ENCODE measurements at regions of chr12 and their contacts with region 1.

Region 1: DNA sequence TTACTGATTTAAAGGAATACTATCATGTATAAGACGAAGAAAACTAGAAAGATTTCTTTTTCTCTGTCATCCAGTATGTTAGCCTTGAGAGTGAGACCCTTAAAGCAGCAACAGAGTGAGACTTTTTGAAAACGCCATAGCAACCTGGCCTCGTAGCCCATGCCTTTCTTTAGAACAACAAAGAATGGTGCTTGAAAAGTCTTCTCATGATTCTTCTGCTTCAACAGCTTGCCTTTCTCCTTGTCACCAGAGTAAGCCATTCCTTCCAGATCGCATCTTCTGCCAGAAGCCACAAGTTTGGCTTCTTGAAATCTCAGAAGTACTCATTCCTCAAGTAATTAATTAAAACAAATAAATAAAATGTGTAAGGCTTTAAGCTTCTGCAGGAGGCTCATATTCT is 109.3 kb downstream of the PDE3A start:
- DNase-seq: no peak
- H3K4me3 ChIP-seq: no peak overlapping the region
- H3K27ac ChIP-seq: no peak overlapping the region
- H3K4me1 ChIP-seq: no peaks in the 10 kb centered on the region
- H3K27me3 ChIP-seq: no peaks in the 10 kb centered on the region
- CTCF ChIP-seq: no peak
- EP300 ChIP-seq: no peak
- POLR2A ChIP-seq: no peak

Region 2: DNA sequence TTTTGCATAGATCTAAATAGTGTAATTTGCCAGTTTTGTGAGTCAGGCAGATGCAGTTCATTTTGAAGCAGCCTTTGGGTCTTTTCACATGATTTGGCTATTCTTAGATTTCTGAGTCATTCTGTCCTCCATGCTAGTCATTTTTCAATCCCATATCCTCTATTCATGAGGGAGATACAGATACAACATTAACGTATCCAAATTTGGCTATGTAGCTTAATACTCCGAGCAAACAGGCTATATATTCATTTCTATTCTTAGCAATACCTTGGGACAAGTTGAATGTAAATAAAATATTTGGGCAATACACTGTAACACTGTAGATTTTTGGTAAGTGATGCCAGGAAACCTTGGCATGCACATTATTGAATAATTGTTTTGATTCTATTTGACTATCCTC is 380.0 kb before region 1 on chr12:
- intact Hi-C with region 1: no loop called
- DNase-seq: no peak
- H3K4me3 ChIP-seq: no peak overlapping the region
- H3K27ac ChIP-seq: no peak overlapping the region
- H3K4me1 ChIP-seq: peaks cover 3% of the 10 kb centered on the region
- H3K27me3 ChIP-seq: no peaks in the 10 kb centered on the region
- CTCF ChIP-seq: no peak
- EP300 ChIP-seq: no peak
- POLR2A ChIP-seq: no peak

Region 3: DNA sequence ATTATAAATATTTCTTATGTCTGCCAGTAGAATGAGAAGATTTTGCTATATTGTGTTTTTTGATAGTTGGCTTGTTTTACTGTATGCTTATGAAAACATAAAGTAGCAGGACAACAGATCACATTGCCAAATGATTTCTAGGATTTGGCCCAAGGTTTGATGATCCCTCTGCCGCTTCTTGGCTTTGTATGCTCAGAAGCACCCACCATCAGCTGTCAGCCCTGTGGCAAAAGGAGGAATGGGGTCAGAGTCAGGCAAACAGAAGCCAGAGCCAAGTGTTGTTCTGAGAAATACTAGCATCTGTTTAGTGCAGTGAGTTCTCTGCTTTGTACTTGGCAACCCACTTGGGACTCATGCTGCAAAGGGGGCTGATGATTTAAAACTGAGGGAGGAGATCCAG is 42.9 kb after region 1 on chr12:
- intact Hi-C with region 1: loop called in 1 of 4 experiments (anchors 1 kb)
- DNase-seq: peak in 1 of 5 donors; percentile 12
- H3K4me3 ChIP-seq: no peak overlapping the region
- H3K27ac ChIP-seq: no peak overlapping the region
- H3K4me1 ChIP-seq: no peaks in the 10 kb centered on the region
- H3K27me3 ChIP-seq: no peaks in the 10 kb centered on the region
- CTCF ChIP-seq: no peak
- EP300 ChIP-seq: no peak
- POLR2A ChIP-seq: no peak

Measured in ovary (tissue), 10 donors.